B cell (primary cell): ENCODE measurements at regions of chr5 and their contacts with region 1.

Region 1: GRCh38 chr5:170225326-170226128 is 7.3 kb upstream of the C5orf58 start:
- DNase-seq: peak; percentile 69
- ATAC-seq: no peak
- H3K4me3 ChIP-seq: no peak overlapping the region
- H3K4me3 Mint-ChIP-seq: no peak overlapping the region
- H3K27ac ChIP-seq: no peak overlapping the region
- H3K27ac Mint-ChIP-seq: no peak overlapping the region
- H3K4me1 ChIP-seq: no peaks in the 10 kb centered on the region
- H3K4me1 Mint-ChIP-seq: peaks cover 1% of the 10 kb centered on the region
- H3K27me3 ChIP-seq: no peaks in the 10 kb centered on the region
- H3K27me3 Mint-ChIP-seq: peaks cover 10% of the 10 kb centered on the region
- CTCF ChIP-seq: peak; percentile 81

Region 2: GRCh38 chr5:170131235-170131634 is 94.3 kb before region 1 on chr5:
- CTCF ChIA-PET with region 1: no interaction called
- POLR2A ChIA-PET with region 1: no interaction called
- intact Hi-C with region 1: no loop called
- DNase-seq: no peak
- ATAC-seq: no peak
- H3K4me3 ChIP-seq: no peak overlapping the region
- H3K4me3 Mint-ChIP-seq: no peak overlapping the region
- H3K27ac ChIP-seq: no peak overlapping the region
- H3K27ac Mint-ChIP-seq: no peak overlapping the region
- H3K4me1 ChIP-seq: no peaks in the 10 kb centered on the region
- H3K4me1 Mint-ChIP-seq: no peaks in the 10 kb centered on the region
- H3K27me3 ChIP-seq: no peaks in the 10 kb centered on the region
- H3K27me3 Mint-ChIP-seq: peaks cover 16% of the 10 kb centered on the region
- CTCF ChIP-seq: no peak

Region 3: DNA sequence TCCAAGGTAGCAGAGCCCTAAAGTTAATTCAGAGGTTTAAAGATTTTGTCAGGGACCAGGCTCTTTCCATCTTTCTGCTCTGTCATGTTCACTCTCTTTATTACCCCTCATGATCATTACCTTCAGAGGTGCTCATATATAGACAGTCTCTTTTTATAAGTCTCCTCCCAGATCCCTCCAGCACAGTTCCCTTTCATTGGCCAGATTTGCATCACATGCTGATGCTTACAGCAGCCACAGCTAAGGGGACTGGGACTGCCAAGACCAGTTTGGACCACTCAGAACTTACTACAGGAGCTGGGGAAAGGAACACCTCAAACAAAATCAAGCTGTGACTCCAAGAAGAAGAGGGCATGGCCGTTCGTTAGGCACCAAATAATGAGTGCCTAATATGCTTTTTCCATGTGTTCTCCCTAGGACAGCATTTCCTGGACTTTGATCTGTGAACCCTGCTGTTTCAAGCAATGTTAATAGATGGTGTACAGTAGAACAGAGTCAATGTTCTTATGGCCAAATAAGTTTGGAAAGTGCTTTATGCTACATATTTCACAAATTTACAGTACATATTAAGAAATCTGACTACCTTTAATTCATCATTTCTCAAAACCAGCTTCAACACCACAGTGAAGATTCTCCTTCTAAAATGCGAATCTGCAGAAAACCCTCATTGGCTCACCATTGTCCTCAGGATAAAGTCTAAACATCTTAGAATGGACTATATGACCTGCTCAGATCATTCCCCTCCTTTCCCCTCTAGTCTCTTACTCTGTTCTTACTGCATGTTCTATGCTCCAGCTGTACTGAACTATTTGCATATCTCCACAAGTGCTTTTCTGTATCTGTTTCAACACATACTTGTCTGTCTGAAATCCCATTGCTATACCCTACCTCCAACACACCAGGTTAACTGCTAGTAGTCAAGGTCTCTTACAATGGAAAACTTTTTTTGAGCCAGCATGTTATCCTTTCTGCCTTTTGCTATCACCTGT is 10.6 kb after region 1 on chr5:
- CTCF ChIA-PET with region 1: interaction called, 22 read pairs
- POLR2A ChIA-PET with region 1: no interaction called
- intact Hi-C with region 1: no loop called
- DNase-seq: no peak
- ATAC-seq: no peak
- H3K4me3 ChIP-seq: no peak overlapping the region
- H3K4me3 Mint-ChIP-seq: no peak overlapping the region
- H3K27ac ChIP-seq: no peak overlapping the region
- H3K27ac Mint-ChIP-seq: no peak overlapping the region
- H3K4me1 ChIP-seq: no peaks in the 10 kb centered on the region
- H3K4me1 Mint-ChIP-seq: no peaks in the 10 kb centered on the region
- H3K27me3 ChIP-seq: no peaks in the 10 kb centered on the region
- H3K27me3 Mint-ChIP-seq: no peaks in the 10 kb centered on the region
- CTCF ChIP-seq: no peak

Region 4: GRCh38 chr5:170262061-170263045 is 36.8 kb after region 1 on chr5:
- CTCF ChIA-PET with region 1: interaction called, 57 read pairs
- POLR2A ChIA-PET with region 1: no interaction called
- intact Hi-C with region 1: loop called (anchors 5 kb)
- DNase-seq: no peak
- ATAC-seq: no peak
- H3K4me3 ChIP-seq: no peak overlapping the region
- H3K4me3 Mint-ChIP-seq: no peak overlapping the region
- H3K27ac ChIP-seq: no peak overlapping the region
- H3K27ac Mint-ChIP-seq: no peak overlapping the region
- H3K4me1 ChIP-seq: no peaks in the 10 kb centered on the region
- H3K4me1 Mint-ChIP-seq: no peaks in the 10 kb centered on the region
- H3K27me3 ChIP-seq: peaks cover 0 to 4% (median 0%) of the 10 kb centered on the region in 4 experiments
- H3K27me3 Mint-ChIP-seq: peaks cover 9% of the 10 kb centered on the region
- CTCF ChIP-seq: no peak

Region 5: DNA sequence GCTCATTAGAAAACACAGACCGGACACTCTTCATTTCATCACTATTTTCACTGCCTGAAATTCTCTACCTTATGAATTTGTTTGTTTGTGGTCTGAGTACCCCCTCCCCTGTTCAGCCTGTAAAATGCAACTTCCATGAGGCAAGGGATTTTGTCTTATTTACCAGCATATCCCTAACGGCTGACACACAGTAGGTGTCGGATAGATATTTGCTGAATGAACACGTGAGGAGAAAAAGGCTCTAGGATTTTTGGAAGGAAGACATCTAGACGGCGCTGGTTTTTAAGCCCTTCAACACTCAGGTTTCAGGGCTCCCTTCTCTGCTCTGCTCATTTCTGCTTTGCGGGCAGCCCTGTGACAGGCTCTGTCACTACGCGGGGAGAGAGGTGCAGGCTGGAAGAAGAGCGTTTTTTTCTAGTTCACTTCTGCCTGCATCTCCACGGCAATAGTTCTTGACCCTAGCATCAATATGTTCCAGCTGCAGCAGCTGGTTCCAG is 122.7 kb after region 1 on chr5:
- CTCF ChIA-PET with region 1: interaction called, 104 read pairs
- POLR2A ChIA-PET with region 1: no interaction called
- intact Hi-C with region 1: no loop called
- DNase-seq: no peak
- ATAC-seq: no peak
- H3K4me3 ChIP-seq: no peak overlapping the region
- H3K4me3 Mint-ChIP-seq: no peak overlapping the region
- H3K27ac ChIP-seq: no peak overlapping the region
- H3K27ac Mint-ChIP-seq: no peak overlapping the region
- H3K4me1 ChIP-seq: peaks cover under 1 to 2% of the 10 kb centered on the region in 2 donors
- H3K4me1 Mint-ChIP-seq: peaks cover 3% of the 10 kb centered on the region
- H3K27me3 ChIP-seq: peaks cover 0 to 21% (median 14%) of the 10 kb centered on the region in 4 experiments
- H3K27me3 Mint-ChIP-seq: peaks cover 62% of the 10 kb centered on the region
- CTCF ChIP-seq: no peak

Region 6: DNA sequence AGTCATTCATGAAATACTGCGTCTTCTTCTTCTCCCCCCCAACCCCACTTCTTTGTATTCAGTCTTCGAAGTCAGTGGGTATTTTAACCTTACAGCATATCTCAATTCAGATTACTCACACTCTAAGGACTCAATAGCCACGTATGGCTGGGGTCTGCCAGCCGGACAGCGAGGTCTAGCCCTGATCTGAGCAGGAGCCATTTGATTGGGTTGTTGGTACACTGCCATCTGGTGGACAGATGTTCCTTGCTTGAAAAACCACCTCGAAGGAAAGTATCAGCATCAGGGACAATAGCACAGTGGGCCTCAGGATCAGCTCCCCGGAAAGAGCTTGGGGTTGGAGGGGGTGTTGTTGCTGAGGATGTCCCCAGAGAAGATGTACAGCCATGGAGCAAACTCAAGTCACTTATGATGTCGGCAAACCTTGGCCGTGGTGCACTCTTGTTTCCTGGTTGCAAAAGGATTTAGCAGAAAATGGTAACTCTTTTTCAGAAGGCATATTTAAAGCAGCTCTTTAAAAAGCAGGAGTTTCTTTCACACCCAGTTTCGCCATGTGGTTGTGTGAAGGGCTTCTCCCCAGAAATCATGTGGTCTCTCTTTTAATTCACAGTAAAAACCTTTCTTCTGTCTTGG is 195.4 kb after region 1 on chr5:
- CTCF ChIA-PET with region 1: interaction called, 189 read pairs
- POLR2A ChIA-PET with region 1: no interaction called
- intact Hi-C with region 1: loop called (anchors 1 kb)
- DNase-seq: peak; percentile 74
- ATAC-seq: peak; percentile 41
- H3K4me3 ChIP-seq: no peak overlapping the region
- H3K4me3 Mint-ChIP-seq: no peak overlapping the region
- H3K27ac ChIP-seq: no peak overlapping the region
- H3K27ac Mint-ChIP-seq: no peak overlapping the region
- H3K4me1 ChIP-seq: no peaks in the 10 kb centered on the region
- H3K4me1 Mint-ChIP-seq: no peaks in the 10 kb centered on the region
- H3K27me3 ChIP-seq: peaks cover 0 to 16% (median 6%) of the 10 kb centered on the region in 4 experiments
- H3K27me3 Mint-ChIP-seq: peaks cover 34% of the 10 kb centered on the region
- CTCF ChIP-seq: peak; percentile 78

Region 7: DNA sequence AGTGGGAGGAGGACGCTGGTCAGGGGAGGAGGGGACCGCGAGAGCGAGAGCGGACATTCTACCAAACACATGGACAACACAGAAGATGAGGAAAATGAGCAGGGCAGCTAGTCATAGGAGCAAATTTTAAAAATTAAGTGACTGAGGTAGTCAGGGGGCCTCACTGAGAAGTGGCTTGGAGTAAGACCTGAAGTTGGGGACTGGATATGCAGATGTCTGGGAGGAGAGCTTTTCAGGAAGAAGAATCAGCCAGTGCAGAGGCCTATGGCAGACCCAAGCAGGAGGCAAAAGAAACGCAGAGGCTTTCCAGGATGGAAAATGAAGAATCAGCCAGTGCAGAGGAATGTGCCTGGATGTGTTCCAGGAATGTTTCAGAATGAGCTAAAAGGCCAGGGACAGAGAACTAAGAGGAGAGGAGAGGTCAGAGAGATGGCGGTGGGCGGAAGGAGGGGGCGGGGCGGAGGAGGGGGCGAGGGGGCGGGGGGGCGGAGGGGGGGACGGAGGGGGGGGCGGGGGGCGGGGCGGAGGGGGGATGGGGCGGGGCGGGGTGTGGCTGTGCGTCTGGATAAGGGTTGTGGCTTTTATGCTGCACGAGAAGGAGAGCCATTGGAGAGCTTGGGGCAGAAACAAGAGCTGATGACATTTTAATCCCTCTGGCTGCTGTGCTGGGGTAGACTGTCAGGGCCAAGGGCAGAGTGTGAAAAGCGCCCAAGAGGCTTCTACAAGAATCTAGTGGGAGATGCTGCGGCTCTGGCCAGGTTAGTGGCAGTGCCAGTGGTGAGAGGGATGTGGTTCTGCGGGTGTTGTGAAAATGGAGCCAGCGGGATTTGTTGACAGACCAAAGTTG is 407.9 kb after region 1 on chr5:
- CTCF ChIA-PET with region 1: interaction called, 10 read pairs
- POLR2A ChIA-PET with region 1: no interaction called
- intact Hi-C with region 1: no loop called
- DNase-seq: no peak
- ATAC-seq: peak; percentile 32
- H3K4me3 ChIP-seq: peak overlapping the region in 3 of 5 experiments; percentile 19 to 33 (median 23)
- H3K4me3 Mint-ChIP-seq: peak overlapping the region; percentile 81
- H3K27ac ChIP-seq: no peak overlapping the region
- H3K27ac Mint-ChIP-seq: no peak overlapping the region
- H3K4me1 ChIP-seq: peaks cover 6 to 17% of the 10 kb centered on the region in 2 donors
- H3K4me1 Mint-ChIP-seq: peaks cover 15% of the 10 kb centered on the region
- H3K27me3 ChIP-seq: peaks cover 0 to 11% (median 2%) of the 10 kb centered on the region in 4 experiments
- H3K27me3 Mint-ChIP-seq: peaks cover 42% of the 10 kb centered on the region
- CTCF ChIP-seq: peak; percentile 51